ENCODE measurements at regions of chr6 and their contacts with region 1.

Region 1: DNA sequence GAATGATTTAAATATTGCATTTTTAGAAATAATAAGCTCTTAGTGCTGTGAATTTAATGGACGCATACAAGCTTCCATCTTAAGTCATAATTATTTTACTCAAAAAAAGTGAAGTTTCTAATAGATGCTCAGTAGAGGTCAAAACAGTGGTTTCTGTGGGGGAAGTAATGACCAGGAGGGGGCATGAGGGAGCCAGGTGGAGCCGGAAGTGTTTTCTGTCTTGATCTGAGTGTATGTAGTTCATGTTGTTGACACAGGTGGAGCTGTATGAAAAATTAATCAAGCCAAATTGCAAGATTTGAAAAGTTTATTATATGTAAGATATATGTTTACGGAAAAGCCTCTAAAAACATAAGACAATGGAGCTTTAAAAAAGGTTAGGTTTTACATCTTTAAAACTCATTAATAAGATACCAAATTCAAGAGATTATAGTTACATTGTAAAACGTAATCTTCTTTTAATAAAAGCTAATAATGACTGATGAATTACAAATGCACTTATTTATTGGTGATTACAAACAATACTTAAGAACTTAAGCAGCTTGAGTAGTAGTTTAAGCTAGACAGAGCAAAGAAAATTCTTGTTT is 68.0 kb downstream of the PLAGL1 start:
- DNase-seq: peak; percentile 77
- ATAC-seq: peak; percentile 87
- H3K4me3 Mint-ChIP-seq: no peak overlapping the region
- H3K27ac Mint-ChIP-seq: no peak overlapping the region
- H3K4me1 Mint-ChIP-seq: peaks cover 15% of the 10 kb centered on the region
- H3K27me3 Mint-ChIP-seq: peaks cover 5% of the 10 kb centered on the region

Region 2: GRCh38 chr6:143575440-143575839 is 364.7 kb before region 1 on chr6:
- CTCF ChIA-PET with region 1: interaction called, 79 read pairs
- POLR2A ChIA-PET with region 1: interaction called, 3 read pairs
- DNase-seq: peak; percentile 73
- ATAC-seq: peak; percentile 82
- H3K4me3 Mint-ChIP-seq: no peak overlapping the region
- H3K27ac Mint-ChIP-seq: no peak overlapping the region
- H3K4me1 Mint-ChIP-seq: no peaks in the 10 kb centered on the region
- H3K27me3 Mint-ChIP-seq: no peaks in the 10 kb centered on the region

Region 3: DNA sequence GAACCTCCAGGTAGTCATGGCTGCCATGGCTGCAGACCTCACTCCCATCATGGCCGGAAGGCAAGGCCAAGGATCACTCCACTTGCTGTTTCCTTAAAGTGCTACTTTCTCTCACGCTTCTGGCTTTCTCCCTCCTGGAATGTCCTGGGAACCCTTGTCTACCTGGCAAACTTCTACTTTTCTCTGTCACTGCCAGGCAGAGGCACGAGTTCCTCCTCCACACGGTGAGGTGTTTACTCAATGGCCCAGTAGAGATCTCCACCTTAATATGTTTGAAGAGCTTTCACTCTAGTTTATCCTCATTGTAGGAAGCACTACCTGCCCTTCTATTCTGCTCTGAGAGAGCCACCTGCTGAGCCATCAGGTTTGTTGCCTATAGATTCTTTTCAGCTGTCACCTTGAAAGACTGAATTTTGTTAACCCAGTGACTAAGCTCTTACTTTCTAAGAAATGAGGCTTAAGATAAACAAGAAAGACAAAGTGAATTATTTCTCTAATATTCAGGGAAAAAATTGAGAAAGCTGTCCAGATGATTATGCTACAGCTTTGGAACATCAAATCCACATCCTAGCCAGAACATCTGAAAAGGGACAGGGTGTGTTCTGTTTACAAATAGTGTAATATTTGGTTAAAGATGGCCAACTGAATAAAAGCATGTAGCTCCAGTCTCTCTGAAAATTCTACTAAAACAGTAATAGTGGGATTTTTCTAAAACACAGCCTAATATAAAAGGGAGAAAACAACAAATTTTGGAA is 13.0 kb after region 1 on chr6:
- CTCF ChIA-PET with region 1: interaction called, 25 read pairs
- POLR2A ChIA-PET with region 1: no interaction called
- DNase-seq: no peak
- ATAC-seq: no peak
- H3K4me3 Mint-ChIP-seq: no peak overlapping the region
- H3K27ac Mint-ChIP-seq: no peak overlapping the region
- H3K4me1 Mint-ChIP-seq: no peaks in the 10 kb centered on the region
- H3K27me3 Mint-ChIP-seq: no peaks in the 10 kb centered on the region

Region 4: DNA sequence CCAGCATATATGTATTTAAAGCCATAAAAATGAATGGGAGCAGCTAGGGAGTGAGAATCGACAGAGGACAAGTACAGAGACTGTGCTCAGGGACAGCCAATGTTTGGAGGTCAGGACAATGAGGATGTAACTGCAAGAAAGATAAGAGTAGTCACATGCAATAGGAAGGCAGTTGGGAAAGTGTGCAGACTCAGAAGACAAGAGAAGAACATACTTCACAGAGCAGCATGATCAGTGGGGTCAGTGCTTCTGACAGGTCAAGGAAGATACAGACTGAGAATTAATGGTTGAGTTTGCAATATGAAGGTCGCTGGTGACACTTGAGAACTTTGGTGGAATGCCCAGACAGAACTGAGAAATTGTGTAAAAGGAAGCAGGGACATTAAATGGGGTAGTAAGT is 42.9 kb after region 1 on chr6:
- CTCF ChIA-PET with region 1: interaction called, 11 read pairs
- POLR2A ChIA-PET with region 1: no interaction called
- DNase-seq: no peak
- ATAC-seq: no peak
- H3K4me3 Mint-ChIP-seq: no peak overlapping the region
- H3K27ac Mint-ChIP-seq: no peak overlapping the region
- H3K4me1 Mint-ChIP-seq: no peaks in the 10 kb centered on the region
- H3K27me3 Mint-ChIP-seq: no peaks in the 10 kb centered on the region

Region 5: DNA sequence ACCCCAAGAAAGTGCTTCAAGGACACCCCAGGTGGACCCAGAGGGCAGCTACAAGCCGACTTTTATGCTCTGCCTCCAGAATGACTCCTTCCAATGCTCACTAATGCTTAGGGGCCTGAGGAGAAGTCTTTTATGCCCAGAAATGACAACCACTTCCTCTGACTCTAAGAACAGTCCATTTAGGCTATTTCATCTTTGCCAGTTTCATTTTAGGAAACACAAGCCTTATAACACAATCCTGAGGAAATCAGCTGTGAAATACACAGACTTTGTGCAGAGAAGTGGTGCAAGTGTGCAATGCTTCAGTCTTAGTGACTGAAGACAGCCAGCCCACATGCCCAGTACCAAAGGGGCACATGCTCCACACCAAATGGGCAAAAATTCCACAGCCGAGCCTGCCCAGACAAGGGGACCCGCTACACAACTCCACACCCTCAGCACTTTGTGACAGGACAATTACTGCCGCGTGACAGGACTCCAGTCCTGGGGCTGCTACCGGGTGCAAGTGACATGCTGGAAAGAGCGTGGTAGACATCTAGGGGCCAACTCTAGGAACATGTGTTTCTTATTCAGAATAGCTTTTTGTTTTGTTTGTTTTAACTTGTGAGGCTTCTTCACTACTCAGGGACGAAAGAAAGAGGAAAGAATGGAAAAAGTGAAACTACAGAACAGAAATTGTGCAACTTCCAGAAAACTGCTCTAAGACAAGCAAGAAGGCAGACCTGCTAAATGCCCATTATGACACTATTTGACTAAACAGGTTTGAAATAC is 96.1 kb after region 1 on chr6:
- CTCF ChIA-PET with region 1: interaction called, 43 read pairs
- POLR2A ChIA-PET with region 1: no interaction called
- DNase-seq: peak; percentile 51
- ATAC-seq: peak; percentile 85
- H3K4me3 Mint-ChIP-seq: peak overlapping the region; percentile 46
- H3K27ac Mint-ChIP-seq: peak overlapping the region; percentile 62
- H3K4me1 Mint-ChIP-seq: peaks cover 18% of the 10 kb centered on the region
- H3K27me3 Mint-ChIP-seq: no peaks in the 10 kb centered on the region

Region 6: DNA sequence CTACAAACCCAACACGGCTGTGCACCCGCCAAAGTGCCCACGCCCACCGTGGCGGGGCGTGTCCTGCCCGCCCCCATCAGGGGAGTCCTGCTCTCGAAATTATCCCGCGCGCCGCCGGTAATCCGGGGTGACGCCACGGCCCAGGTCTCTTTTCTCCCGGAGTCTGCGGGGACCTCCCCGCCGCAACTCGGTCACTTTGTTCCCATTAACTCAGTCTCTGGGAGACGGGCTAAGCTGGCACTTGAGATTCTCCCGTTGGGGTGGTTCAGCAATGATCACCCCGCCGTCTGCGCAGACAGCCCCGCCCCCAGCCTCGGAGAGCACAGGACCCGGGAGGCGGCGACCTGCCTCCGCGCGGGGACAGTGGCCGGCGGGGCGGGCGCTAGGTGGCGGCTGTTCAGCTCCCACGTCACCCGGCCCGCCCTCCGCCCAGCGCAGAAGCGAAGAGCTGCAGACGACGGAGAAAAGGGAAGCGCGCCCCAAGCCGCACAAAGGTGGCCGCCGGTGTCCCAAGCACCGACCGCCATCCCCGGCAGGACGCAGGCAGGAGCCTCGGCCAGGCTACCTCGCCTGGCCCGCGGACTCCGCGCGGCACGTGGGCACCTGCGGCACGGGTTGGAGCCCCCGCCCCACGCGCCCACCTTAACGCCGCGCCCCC is 123.8 kb after region 1 on chr6:
- CTCF ChIA-PET with region 1: interaction called, 11 read pairs
- POLR2A ChIA-PET with region 1: no interaction called
- DNase-seq: peak; percentile 94
- ATAC-seq: peak; percentile 96
- H3K4me3 Mint-ChIP-seq: peak overlapping the region; percentile 88
- H3K27ac Mint-ChIP-seq: peak overlapping the region; percentile 94
- H3K4me1 Mint-ChIP-seq: peaks cover 46% of the 10 kb centered on the region
- H3K27me3 Mint-ChIP-seq: peaks cover 3% of the 10 kb centered on the region

Region 7: DNA sequence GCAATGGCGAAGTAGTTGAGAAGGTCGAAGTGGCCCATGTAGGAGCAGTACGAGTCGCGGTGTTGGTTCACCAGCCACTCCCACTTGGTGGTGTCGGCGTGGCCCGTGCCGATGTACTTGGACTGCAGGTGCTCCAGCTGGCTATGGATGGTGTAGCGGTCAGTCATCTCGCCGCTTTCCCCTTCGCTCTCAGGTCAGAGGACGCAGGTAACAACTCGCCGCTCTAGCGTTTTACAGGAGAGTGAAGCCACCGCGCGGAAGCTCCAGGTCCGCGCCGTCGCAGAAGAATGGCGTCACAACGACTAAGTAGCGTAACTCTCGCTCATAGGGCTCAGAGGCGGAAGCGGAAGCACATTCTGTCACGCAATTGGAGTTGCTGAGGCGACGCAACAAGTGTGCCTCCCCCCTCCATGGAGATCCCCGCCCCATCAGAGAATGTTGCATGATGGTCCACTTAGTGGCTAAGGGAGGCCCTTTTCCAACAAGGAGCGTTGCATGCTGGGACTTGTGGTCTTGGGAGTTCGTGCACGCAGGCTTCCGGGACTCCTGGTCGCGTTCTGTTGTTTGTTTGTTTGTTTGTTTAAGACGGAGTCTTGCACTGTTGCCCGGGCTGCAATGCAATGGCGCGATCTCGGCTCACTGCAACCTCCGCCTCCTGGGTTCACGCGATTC is 155.4 kb after region 1 on chr6 and contains the start of gene SF3B5:
- CTCF ChIA-PET with region 1: interaction called, 14 read pairs
- POLR2A ChIA-PET with region 1: interaction called, 4 read pairs
- DNase-seq: peak; percentile 99
- ATAC-seq: peak; percentile 97
- H3K4me3 Mint-ChIP-seq: peak within 1 kb of the TSS; percentile 96
- H3K27ac Mint-ChIP-seq: peak within 1 kb of the TSS; percentile 99
- H3K4me1 Mint-ChIP-seq: peaks cover 33% of the 10 kb centered on the region
- H3K27me3 Mint-ChIP-seq: no peaks in the 10 kb centered on the region
- total RNA-seq, gene SF3B5: 167 to 168 TPM

Measured in activated CD8-positive, alpha-beta T cell treated with anti-CD3 and anti-CD28 coated beads, Interleukin-2, amount 10 ng/mL, durations not matched to agents 7 days and 5 days (primary cell).